GM12878 (cell line): ENCODE measurements at regions of chr15 and their contacts with region 1.

Region 1: GRCh38 chr15:90648137-90649070 is 68.7 kb upstream of the BLM start:
- DNase-seq: no peak
- ATAC-seq: peak; percentile 84
- H3K4me3 ChIP-seq: no peak overlapping the region
- H3K27ac ChIP-seq: peak overlapping the region; percentile 89
- H3K4me1 ChIP-seq: peaks cover 14% of the 10 kb centered on the region
- H3K27me3 ChIP-seq: no peaks in the 10 kb centered on the region
- CTCF ChIP-seq: peak; percentile 79 to 88 (median 84)
- EP300 ChIP-seq: 0 out of 4 replicates have a peak, but pooled peaks of 1 of the 2 experiments have one; percentile 20
- POLR2A ChIP-seq: no peak
- RAD21 ChIP-seq: peak; percentile 98

Region 2: DNA sequence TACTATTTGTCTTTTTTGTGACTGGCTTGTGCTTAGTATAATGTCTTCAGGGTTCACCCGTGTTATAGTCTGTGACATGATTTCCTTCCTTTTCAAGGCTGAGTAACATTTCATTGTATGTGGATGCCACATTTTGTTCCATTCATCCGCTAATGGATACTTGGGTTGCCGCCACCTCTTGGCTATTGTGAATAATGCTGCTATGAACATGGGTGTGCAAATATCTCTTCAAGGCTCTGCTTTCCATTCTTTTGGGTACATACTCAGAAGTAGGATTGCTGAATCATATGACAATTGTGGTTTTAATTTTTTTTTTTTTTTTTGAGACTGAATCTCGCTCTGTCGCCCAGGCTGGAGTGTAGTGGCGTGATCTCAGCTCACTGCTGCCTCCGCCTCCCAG is 103.3 kb before region 1 on chr15:
- CTCF ChIA-PET with region 1: no interaction called
- POLR2A ChIA-PET with region 1: no interaction called
- RAD21 ChIA-PET with region 1: no interaction called
- SMC1A ChIA-PET with region 1: no interaction called
- in situ Hi-C with region 1: no loop called
- intact Hi-C with region 1: no loop called
- DNase-seq: no peak
- ATAC-seq: no peak
- H3K4me3 ChIP-seq: no peak overlapping the region
- H3K27ac ChIP-seq: no peak overlapping the region
- H3K4me1 ChIP-seq: peaks cover 2% of the 10 kb centered on the region; the same call in 1 of the 2 replicates
- H3K27me3 ChIP-seq: no peaks in the 10 kb centered on the region
- CTCF ChIP-seq: no peak
- EP300 ChIP-seq: no peak
- POLR2A ChIP-seq: no peak
- RAD21 ChIP-seq: no peak

Region 3: GRCh38 chr15:90660195-90660998 is 12.0 kb after region 1 on chr15:
- CTCF ChIA-PET with region 1: interaction called, 27 read pairs
- POLR2A ChIA-PET with region 1: interaction called, 18 read pairs
- RAD21 ChIA-PET with region 1: interaction called, 24 read pairs
- SMC1A ChIA-PET with region 1: interaction called, 7 read pairs
- in situ Hi-C with region 1: no loop called
- intact Hi-C with region 1: no loop called
- DNase-seq: peak; percentile 86
- ATAC-seq: peak; percentile 72
- H3K4me3 ChIP-seq: peak overlapping the region; percentile 58
- H3K27ac ChIP-seq: peak overlapping the region; percentile 100
- H3K4me1 ChIP-seq: peaks cover 73% of the 10 kb centered on the region
- H3K27me3 ChIP-seq: no peaks in the 10 kb centered on the region
- CTCF ChIP-seq: no peak
- EP300 ChIP-seq: 0 out of 4 replicates have a peak, but pooled peaks of 1 of the 2 experiments have one; percentile 29
- POLR2A ChIP-seq: peak; percentile 77
- RAD21 ChIP-seq: no peak

Region 4: DNA sequence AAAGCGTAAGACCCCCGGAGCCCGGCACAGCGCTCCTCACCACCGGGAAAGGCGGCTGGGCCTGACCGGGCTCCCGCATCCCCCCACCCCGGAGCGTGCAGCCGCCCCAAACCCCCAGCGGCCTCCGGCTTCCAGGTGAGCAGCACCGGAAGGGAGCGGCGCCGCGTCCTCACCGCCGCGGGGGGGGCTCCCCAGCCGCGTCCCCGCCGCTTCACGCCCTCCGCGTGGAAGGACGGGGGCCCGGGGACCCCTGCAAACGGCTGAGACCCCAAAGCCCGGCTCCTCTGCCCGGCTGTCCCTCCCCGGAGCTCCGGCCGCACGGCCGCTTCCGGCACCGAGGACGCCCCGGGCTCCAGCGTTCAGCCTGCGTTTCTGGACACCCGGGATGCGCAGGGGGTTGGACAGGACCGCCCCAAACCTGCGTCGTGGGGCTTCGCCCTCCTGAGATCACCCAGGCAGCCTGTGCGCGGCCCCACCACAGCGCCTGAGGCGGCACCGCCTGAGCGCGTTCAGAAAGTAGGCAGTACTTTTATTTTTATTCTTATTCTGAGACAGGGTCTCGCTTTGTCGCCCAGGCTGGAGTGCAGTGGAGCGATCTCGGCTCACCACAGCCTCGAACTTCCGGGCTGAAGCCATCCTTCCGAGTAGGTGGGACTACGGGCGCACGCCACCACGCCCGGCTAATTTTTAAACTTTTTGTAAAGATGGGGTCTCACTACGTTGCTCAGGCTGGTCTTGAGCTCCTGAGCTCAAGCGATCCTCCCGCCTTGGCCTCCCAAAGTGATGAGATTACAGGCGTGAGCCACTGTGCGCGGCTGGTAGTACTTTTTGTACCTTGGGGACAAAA is 17.1 kb after region 1 on chr15:
- CTCF ChIA-PET with region 1: interaction called, 27 read pairs
- POLR2A ChIA-PET with region 1: interaction called, 18 read pairs
- RAD21 ChIA-PET with region 1: interaction called, 24 read pairs
- SMC1A ChIA-PET with region 1: interaction called, 9 read pairs
- in situ Hi-C with region 1: no loop called
- intact Hi-C with region 1: no loop called
- DNase-seq: peak; percentile 74
- ATAC-seq: peak; percentile 83
- H3K4me3 ChIP-seq: peak overlapping the region; percentile 82
- H3K27ac ChIP-seq: peak overlapping the region; percentile 100
- H3K4me1 ChIP-seq: peaks cover 53% of the 10 kb centered on the region
- H3K27me3 ChIP-seq: no peaks in the 10 kb centered on the region
- CTCF ChIP-seq: no peak
- EP300 ChIP-seq: peak; percentile 24 to 51; a peak in 1 of 4 replicates
- POLR2A ChIP-seq: peak; percentile 78
- RAD21 ChIP-seq: peak; percentile 25; the same call in 1 of the 2 replicates

Region 5: GRCh38 chr15:90686435-90687218 is 38.2 kb after region 1 on chr15:
- CTCF ChIA-PET with region 1: interaction called, 112 read pairs
- POLR2A ChIA-PET with region 1: interaction called, 7 read pairs
- RAD21 ChIA-PET with region 1: interaction called, 48 read pairs
- SMC1A ChIA-PET with region 1: interaction called, 39 read pairs
- in situ Hi-C with region 1: no loop called
- intact Hi-C with region 1: no loop called
- DNase-seq: peak; percentile 92
- ATAC-seq: peak; percentile 85
- H3K4me3 ChIP-seq: no peak overlapping the region
- H3K27ac ChIP-seq: peak overlapping the region; percentile 99
- H3K4me1 ChIP-seq: peaks cover 53% of the 10 kb centered on the region
- H3K27me3 ChIP-seq: no peaks in the 10 kb centered on the region
- CTCF ChIP-seq: no peak
- EP300 ChIP-seq: peak; percentile 91 to 93
- POLR2A ChIP-seq: no peak
- RAD21 ChIP-seq: no peak; the same call in 1 of the 2 replicates

Region 6: GRCh38 chr15:90691982-90692773 is 43.8 kb after region 1 on chr15:
- CTCF ChIA-PET with region 1: interaction called, 112 read pairs
- POLR2A ChIA-PET with region 1: interaction called, 7 read pairs
- RAD21 ChIA-PET with region 1: interaction called, 48 read pairs
- SMC1A ChIA-PET with region 1: interaction called, 39 read pairs
- in situ Hi-C with region 1: no loop called
- intact Hi-C with region 1: no loop called
- DNase-seq: peak; percentile 84
- ATAC-seq: peak; percentile 73
- H3K4me3 ChIP-seq: no peak overlapping the region
- H3K27ac ChIP-seq: peak overlapping the region; percentile 99
- H3K4me1 ChIP-seq: peaks cover 41% of the 10 kb centered on the region
- H3K27me3 ChIP-seq: no peaks in the 10 kb centered on the region
- CTCF ChIP-seq: no peak
- EP300 ChIP-seq: no peak
- POLR2A ChIP-seq: peak; percentile 68
- RAD21 ChIP-seq: peak; percentile 19; the same call in 1 of the 2 replicates

Region 7: GRCh38 chr15:90701880-90702630 is 53.7 kb after region 1 on chr15:
- CTCF ChIA-PET with region 1: interaction called, 112 read pairs
- POLR2A ChIA-PET with region 1: no interaction called
- RAD21 ChIA-PET with region 1: interaction called, 12 read pairs
- SMC1A ChIA-PET with region 1: interaction called, 9 read pairs
- in situ Hi-C with region 1: no loop called
- intact Hi-C with region 1: no loop called
- DNase-seq: no peak
- ATAC-seq: no peak
- H3K4me3 ChIP-seq: no peak overlapping the region
- H3K27ac ChIP-seq: no peak overlapping the region
- H3K4me1 ChIP-seq: peaks cover 4% of the 10 kb centered on the region
- H3K27me3 ChIP-seq: no peaks in the 10 kb centered on the region
- CTCF ChIP-seq: no peak
- EP300 ChIP-seq: no peak
- POLR2A ChIP-seq: no peak
- RAD21 ChIP-seq: peak; percentile 15; the same call in 1 of the 2 replicates

Region 8: DNA sequence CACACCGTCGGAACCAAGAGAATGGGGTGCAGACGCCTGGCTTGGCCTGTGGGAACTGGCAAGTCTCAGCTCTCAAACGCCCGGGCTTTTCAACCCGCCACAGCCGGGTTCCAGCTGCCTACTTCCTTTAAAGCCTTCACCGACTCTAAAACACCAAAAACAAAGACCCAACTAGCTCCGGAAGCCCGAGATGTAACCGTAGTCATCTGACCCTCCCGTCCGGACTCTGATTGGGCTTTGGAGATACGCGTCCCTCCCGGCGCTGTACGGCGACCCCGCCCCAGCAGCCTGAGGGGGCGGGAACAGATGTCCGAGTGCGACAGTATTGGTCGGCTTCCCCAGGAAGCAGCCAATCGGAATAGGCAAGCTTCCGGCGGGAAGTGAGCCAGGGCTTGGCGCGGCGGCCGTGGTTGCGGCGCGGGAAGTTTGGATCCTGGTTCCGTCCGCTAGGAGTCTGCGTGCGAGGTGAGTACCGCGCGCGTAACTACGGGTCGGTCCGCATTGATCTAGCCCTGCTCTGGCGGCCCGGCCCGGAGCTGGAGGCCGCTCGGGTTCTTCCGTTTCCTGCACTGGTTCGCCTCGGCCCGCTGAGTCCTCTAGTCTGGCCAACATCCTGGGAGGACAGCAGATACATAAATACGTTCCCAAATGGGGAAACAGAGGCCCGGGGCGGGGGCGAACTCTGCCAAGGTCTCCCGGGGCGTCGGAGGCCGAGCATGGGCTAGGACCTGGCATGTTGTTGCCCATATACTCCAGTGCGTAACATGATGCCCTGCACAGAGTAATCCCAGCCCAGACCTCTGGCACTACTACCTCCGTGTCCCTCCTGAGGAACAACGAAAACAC is 68.8 kb after region 1 on chr15 and contains the start of gene BLM:
- CTCF ChIA-PET with region 1: interaction called, 6 read pairs
- POLR2A ChIA-PET with region 1: interaction called, 4 read pairs
- RAD21 ChIA-PET with region 1: interaction called, 16 read pairs
- SMC1A ChIA-PET with region 1: interaction called, 6 read pairs
- in situ Hi-C with region 1: no loop called
- intact Hi-C with region 1: no loop called
- DNase-seq: peak; percentile 93
- ATAC-seq: peak; percentile 99
- H3K4me3 ChIP-seq: peak within 1 kb of the TSS; percentile 91
- H3K27ac ChIP-seq: peak within 1 kb of the TSS; percentile 94
- H3K4me1 ChIP-seq: peaks cover 15% of the 10 kb centered on the region
- H3K27me3 ChIP-seq: no peaks in the 10 kb centered on the region
- CTCF ChIP-seq: peak in 1 of 3 experiments; percentile 22; a peak in 1 of 6 replicates
- EP300 ChIP-seq: no peak
- POLR2A ChIP-seq: peak; percentile 85
- RAD21 ChIP-seq: no peak
- polyA plus RNA-seq, gene BLM: 25.3 to 28.2 TPM

Region 9: GRCh38 chr15:91032919-91033803 is 384.8 kb after region 1 on chr15:
- CTCF ChIA-PET with region 1: no interaction called
- POLR2A ChIA-PET with region 1: no interaction called
- RAD21 ChIA-PET with region 1: no interaction called
- SMC1A ChIA-PET with region 1: no interaction called
- in situ Hi-C with region 1: no loop called
- intact Hi-C with region 1: no loop called
- DNase-seq: no peak
- ATAC-seq: peak; percentile 94
- H3K4me3 ChIP-seq: no peak overlapping the region
- H3K27ac ChIP-seq: no peak overlapping the region
- H3K4me1 ChIP-seq: no peaks in the 10 kb centered on the region
- H3K27me3 ChIP-seq: no peaks in the 10 kb centered on the region; a peak in 1 of 4 replicates
- CTCF ChIP-seq: peak; percentile 62 to 86 (median 66)
- EP300 ChIP-seq: no peak
- POLR2A ChIP-seq: no peak
- RAD21 ChIP-seq: peak; percentile 61; the same call in 1 of the 2 replicates